Activated CD4-positive, alpha-beta memory T cell treated with anti-CD3 and anti-CD28 coated beads, Interleukin-2, amount 10 ng/mL, durations not matched to agents 7 days and 5 days (primary cell): ENCODE measurements at regions of chr16 and their contacts with region 1.

Region 1: GRCh38 chr16:71461686-71462648 is at the start of gene ZNF23:
- DNase-seq: peak; percentile 81
- H3K4me3 Mint-ChIP-seq: peak within 1 kb of the TSS; percentile 89
- H3K27ac Mint-ChIP-seq: peak within 1 kb of the TSS; percentile 67
- H3K4me1 Mint-ChIP-seq: peaks cover 24% of the 10 kb centered on the region
- H3K27me3 Mint-ChIP-seq: no peaks in the 10 kb centered on the region
- total RNA-seq, gene ZNF23: 6.0 to 7.3 TPM

Region 2: GRCh38 chr16:71484006-71484893 is 22.3 kb after region 1 on chr16:
- CTCF ChIA-PET with region 1: interaction called, 10 read pairs
- POLR2A ChIA-PET with region 1: interaction called, 26 read pairs
- DNase-seq: peak; percentile 82
- H3K4me3 Mint-ChIP-seq: peak overlapping the region; percentile 79
- H3K27ac Mint-ChIP-seq: peak overlapping the region; percentile 77
- H3K4me1 Mint-ChIP-seq: peaks cover 22% of the 10 kb centered on the region
- H3K27me3 Mint-ChIP-seq: peaks cover 2% of the 10 kb centered on the region